Motor neuron (in vitro differentiated cells): ENCODE measurements at regions of chr5 and their contacts with region 1.

Region 1: DNA sequence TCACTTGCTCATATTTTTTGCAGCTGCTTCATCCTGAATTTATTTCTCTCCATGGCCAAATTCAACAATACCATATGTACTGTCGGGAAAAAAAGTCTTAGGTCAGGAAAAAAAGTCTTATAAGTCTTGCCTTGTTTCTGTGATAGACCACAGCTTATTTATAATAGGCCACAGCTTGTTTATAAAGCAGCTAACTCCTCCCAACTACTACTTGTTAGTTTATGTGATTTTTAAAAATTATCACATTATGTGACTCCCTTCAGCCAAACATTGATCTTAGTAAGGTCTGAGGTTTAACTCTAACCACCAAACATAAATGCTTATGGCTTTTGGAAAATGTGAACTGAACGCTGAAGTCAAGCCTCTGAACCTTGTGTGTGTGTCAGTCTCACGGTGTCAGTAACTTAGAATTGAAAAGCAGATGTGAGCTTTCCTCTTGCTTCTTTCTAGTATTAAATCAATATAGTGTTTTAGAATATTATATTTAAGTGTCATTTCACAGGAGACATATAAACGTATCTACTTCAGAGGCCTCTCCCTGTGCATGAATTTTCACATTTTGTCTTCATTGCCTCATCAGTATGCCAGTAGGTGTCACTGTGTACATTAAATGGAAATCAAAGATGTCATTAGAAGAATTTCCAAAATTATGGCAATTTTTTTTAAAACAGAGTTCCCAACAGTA is 51.3 kb downstream of the SNX24 start:
- ATAC-seq: peak in 1 of 8 experiments; percentile 31
- H3K4me3 ChIP-seq: no peak overlapping the region
- H3K27ac ChIP-seq: no peak overlapping the region
- H3K4me1 ChIP-seq: no peaks in the 10 kb centered on the region

Region 2: GRCh38 chr5:122704243-122705036 is 192.3 kb before region 1 on chr5:
- in situ Hi-C with region 1: no loop called
- ATAC-seq: peak in 3 of 8 experiments; percentile 68 to 82 (median 77)
- H3K4me3 ChIP-seq: no peak overlapping the region
- H3K27ac ChIP-seq: no peak overlapping the region
- H3K4me1 ChIP-seq: no peaks in the 10 kb centered on the region

Region 3: DNA sequence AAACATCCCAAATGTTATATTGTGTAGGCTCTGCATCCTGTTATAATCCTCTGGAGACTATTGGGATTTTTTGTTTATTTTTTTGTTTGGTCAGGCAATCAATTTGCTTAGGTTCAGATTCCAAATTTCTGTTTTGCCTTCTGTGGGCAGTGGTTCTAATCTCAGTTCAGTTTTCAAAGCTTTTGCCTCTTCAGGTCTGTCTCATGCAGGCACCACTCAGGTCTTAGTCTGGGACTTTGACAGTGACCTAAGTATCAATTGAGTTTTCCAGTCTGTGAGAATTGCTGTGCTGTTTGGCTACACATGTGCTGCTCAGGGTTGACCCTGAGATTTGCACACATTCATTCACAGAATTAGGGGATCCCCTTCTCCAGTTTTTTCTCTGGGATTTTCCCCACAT is 107.7 kb before region 1 on chr5:
- in situ Hi-C with region 1: no loop called
- ATAC-seq: no peak
- H3K4me3 ChIP-seq: no peak overlapping the region
- H3K27ac ChIP-seq: no peak overlapping the region
- H3K4me1 ChIP-seq: no peaks in the 10 kb centered on the region

Region 4: GRCh38 chr5:123028222-123028621 is 131.5 kb after region 1 on chr5:
- in situ Hi-C with region 1: no loop called
- ATAC-seq: no peak
- H3K4me3 ChIP-seq: no peak overlapping the region
- H3K27ac ChIP-seq: no peak overlapping the region
- H3K4me1 ChIP-seq: no peaks in the 10 kb centered on the region

Region 5: DNA sequence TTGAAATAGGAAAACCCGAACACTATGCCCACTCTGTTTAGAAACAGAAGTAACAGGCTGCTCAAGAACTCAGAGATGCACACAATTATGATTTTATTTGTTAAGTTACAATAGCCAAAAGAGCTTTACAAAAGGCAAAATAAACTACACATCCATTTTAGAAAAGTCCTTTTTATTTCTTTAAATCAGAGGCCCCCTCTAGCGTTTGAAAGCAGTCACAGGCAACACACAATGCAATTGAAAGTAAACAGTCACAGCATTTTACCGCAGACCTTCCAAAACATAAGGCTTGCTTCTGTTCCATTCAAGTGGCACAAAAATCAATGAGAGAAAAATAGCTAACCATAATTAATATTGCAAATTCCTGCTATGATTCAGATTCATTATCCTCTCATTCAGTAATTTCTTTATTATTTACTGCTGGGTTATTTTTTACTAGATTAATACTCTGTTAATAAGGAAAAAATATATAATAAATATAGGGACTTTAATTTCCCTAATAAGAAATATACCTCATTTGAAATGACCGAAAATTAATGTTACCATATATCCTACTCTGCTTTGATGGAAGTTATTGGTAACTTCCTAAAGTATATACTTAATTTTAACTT is 448.2 kb after region 1 on chr5:
- in situ Hi-C with region 1: loop called in 2 of 9 experiments (anchors 25 kb)
- ATAC-seq: peak in 3 of 8 experiments; percentile 52 to 56 (median 53)
- H3K4me3 ChIP-seq: no peak overlapping the region
- H3K27ac ChIP-seq: no peak overlapping the region
- H3K4me1 ChIP-seq: no peaks in the 10 kb centered on the region

Region 6: GRCh38 chr5:123371575-123372179 is 474.9 kb after region 1 on chr5:
- in situ Hi-C with region 1: loop called in 1 of 9 experiments (anchors 25 kb)
- ATAC-seq: peak in 2 of 8 experiments; percentile 42 to 45
- H3K4me3 ChIP-seq: no peak overlapping the region
- H3K27ac ChIP-seq: no peak overlapping the region
- H3K4me1 ChIP-seq: no peaks in the 10 kb centered on the region